PC-9 (cell line): ENCODE measurements at regions of chr7 and their contacts with region 1.

Region 1: DNA sequence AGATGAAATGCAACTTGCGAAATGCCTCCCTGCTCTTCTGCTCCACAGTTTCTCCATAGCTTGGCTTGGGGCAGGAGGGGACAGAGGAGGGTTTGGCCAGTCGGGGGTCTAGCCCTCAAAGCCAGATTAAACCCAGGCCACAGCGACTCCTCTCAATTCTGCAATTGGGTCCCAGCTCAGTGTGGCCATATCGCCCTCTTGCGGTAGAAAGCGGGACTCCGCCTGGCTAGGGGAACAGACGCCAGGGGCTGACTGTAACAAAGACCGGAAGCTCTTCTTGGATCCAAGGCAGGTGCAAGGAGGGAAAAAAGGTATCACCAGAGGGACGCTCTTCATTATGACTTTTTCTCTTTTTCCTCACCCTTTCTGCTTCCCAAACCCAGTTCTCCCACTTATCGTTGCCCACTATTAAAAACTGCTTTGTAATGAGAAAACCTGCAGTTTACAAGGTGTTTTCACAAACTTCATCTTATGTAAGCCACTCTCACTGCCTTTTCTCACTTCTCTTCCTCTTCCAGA is 36.6 kb upstream of the TNPO3 start:
- DNase-seq: peak; percentile 51 to 90
- H3K4me3 ChIP-seq: no peak overlapping the region
- H3K27ac ChIP-seq: no peak overlapping the region
- H3K4me1 ChIP-seq: no peaks in the 10 kb centered on the region
- H3K27me3 ChIP-seq: no peaks in the 10 kb centered on the region
- CTCF ChIP-seq: peak; percentile 94

Region 2: DNA sequence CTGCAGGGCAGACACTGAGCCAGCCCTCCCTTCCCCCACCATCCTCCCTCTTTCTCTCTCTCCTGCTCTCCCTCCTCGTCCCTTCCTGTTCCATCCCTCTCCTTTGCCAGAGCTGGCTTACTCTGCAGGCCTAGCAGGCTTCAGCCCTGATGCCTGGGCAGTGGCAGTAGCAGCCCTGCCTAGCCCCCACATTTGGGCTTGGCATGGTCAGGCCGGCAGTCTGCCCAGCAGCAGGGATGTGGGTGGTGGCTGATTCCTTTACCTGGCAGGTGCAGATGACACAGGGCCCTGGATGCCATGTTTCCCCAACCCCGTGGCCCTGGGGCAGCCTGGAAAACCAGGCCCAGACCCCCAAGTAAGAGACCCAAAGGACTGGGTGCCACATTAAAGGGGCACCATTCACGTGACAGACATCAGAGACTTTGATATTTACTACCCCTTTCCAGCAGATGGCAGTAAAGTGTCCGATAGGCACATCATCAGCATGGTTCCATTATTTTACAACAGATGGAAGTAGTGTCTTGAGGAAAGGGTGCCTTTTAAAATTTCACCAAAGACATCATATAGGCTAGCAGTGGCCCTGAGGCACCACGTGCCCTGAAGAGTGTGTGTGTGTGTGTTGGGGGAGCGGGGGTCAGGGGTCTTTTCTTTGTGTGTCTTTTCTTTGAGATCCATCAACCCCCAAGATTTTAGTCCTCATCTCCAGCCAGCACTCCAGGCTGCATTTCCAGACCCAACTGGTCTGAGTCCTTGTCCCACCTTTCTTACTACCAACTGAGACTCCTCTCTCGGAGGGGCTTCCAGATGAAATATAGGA is 187.0 kb before region 1 on chr7:
- CTCF ChIA-PET with region 1: interaction called, 3 read pairs
- POLR2A ChIA-PET with region 1: no interaction called
- intact Hi-C with region 1: loop called (anchors 1 kb)
- DNase-seq: no peak
- H3K4me3 ChIP-seq: no peak overlapping the region
- H3K27ac ChIP-seq: no peak overlapping the region
- H3K4me1 ChIP-seq: peaks cover 27% of the 10 kb centered on the region
- H3K27me3 ChIP-seq: no peaks in the 10 kb centered on the region
- CTCF ChIP-seq: peak; percentile 73

Region 3: DNA sequence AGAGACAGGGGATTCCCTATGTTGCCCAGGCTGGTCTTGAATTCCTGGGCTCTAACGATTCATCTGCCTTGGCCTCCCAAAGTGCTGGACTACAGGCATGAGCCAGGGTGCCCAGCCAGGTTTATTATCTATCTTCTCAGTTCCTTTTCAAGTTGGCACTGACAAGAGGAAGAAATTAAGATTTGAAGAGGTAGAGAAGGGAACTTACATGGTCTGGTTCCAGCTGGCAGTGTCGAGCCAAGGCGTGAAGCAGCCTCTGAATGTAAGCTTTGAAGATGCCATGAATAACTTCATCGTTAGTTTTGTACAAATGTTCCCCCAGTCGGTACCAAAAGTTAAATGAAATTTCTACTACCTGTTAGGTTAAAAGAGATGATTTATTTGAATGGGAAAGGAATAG is 94.4 kb before region 1 on chr7:
- CTCF ChIA-PET with region 1: interaction called, 3 read pairs
- POLR2A ChIA-PET with region 1: no interaction called
- intact Hi-C with region 1: loop called (anchors 10 kb)
- DNase-seq: no peak
- H3K4me3 ChIP-seq: no peak overlapping the region
- H3K27ac ChIP-seq: no peak overlapping the region
- H3K4me1 ChIP-seq: no peaks in the 10 kb centered on the region
- H3K27me3 ChIP-seq: no peaks in the 10 kb centered on the region
- CTCF ChIP-seq: no peak